ENCODE measurements at regions of chr19 and their contacts with region 1.

Region 1: DNA sequence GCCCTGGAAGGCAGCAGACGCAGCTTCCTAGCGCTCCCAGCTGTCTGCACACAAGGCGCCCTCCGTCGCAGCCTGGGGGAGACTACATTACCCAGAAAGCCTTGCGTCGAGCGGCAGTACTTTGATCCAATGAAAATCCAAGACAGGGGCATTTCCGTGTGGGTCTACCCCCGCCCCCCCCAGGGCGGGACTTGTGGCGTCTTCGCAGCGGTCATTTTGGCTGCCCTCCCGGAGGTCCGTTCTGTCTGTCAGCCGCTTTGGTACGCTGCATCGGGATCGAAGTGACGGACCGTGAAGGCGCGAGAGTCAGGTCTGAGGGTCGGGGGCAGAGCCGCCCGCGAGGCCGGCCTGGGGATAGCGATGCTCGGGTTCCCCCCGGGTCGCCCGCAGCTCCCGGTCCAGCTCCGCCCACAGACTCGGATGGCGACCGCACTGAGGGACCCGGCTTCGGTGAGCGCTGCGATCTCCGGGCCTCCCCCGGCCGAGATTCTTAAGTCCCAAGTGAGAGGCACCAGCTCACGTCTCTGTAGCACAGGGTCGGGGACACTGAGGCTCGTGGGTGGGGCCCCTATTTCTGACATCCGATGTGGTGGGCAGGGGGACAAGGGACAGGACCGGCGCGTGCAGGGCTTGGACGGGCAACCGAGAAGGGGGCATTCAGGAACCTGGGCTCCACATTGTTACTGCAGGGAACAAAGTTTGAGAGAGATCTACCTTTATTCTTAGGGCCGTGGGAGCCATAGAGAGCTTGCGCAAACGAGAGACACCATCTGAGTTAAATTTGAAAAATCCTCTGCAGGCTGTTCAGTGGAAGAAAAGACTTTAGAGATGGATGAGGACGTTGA is at the start of gene ZNF211:
- DNase-seq: peak; percentile 94
- H3K4me3 ChIP-seq: peak within 1 kb of the TSS; percentile 51 to 75 (median 71)
- H3K27ac ChIP-seq: peak within 1 kb of the TSS; percentile 26
- H3K4me1 ChIP-seq: peaks cover 5% of the 10 kb centered on the region
- H3K27me3 ChIP-seq: no peaks in the 10 kb centered on the region
- CTCF ChIP-seq: no peak
- POLR2A ChIP-seq: peak; percentile 46
- total RNA-seq, gene ZNF211: 8.6 and 9.4 TPM in 2 replicates

Region 2: DNA sequence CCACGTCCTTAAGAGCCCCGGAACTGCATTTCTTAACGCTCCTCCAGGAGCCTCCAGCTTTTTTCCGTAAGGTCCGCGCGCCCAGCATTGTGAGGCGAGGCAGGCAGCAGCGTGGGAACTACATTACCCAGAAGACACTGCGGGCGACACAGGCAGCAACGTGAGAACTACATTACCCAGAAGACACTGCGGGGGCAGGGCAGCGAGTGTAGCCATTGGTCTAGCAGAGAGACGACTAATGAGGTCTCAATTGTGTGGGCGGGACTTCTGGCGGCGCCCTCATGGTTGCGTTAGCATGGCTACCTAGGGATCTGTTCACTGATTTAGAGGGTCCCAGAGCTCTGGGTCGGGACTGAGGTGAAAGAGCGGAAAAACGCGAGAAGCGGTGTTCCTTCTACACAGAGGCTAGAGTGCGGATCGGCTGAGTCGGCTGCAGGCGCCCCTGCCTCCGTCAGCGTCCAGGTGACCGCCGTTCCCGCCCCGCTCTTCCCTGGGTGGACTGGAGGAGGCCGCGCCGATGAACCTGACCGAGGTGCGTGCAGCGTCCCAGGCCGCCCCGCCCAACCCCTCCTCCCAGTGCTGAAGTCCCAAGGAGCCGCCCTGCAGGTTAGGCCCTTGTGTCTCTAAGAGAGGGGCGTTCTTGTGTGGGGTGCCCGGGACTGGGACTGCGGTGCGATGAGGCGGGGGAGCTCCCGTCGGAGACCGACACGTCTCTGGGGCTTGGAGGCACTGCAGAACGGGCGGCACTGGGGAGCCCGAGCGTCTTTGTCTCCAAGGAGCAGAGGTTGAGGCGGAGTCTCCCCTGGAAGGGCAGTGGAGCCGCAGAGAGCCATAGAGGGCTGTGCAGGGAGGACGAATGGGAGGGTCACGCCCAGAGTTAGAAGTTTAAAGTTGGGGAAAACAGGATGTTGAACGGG is 197.9 kb before region 1 on chr19 and contains the start of gene ZNF749:
- CTCF ChIA-PET with region 1: no interaction called
- POLR2A ChIA-PET with region 1: no interaction called
- dilution Hi-C with region 1: no loop called
- intact Hi-C with region 1: loop called (anchors 2 kb)
- DNase-seq: peak; percentile 98
- H3K4me3 ChIP-seq: peak within 1 kb of the TSS; percentile 58 to 81 (median 68)
- H3K27ac ChIP-seq: no peak within 1 kb of the TSS
- H3K4me1 ChIP-seq: peaks cover 10% of the 10 kb centered on the region
- H3K27me3 ChIP-seq: no peaks in the 10 kb centered on the region
- CTCF ChIP-seq: no peak
- POLR2A ChIP-seq: peak; percentile 14
- total RNA-seq, gene ZNF749: 8.9 and 11.5 TPM in 2 replicates

Region 3: DNA sequence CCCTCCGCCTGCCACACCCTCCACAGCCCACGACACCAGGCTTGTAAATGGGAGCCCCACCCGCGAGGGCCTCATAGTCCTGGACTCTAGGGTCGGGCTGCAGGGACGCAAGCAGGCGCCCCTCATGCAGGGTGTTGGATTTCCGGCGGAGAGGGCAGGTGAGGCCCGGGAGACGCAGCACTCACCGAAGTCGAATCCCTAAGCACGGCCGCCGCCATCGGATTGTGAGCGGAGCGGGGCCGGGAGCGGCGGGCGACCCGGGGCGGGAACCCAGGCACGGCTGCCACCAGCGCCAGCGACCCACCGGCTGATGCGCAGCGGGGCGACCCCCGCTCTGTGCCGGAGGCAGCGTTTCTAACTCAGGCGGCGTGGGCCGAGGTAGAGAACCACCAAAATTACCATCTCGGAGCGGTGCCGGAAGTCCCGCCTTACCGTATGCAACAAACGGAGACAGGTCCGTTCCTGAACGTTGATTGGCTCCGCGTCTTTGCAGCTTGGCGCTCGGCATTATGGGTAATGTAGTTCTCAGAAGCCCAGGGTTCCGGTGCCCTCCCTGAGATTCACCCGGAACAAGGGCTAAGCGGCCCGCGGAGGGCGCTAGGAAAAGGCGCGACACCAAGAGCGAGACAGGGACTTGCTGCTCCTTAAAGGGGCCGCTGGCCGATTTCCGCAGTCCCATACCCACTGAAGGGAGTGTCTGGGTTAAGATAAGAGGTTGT is 54.6 kb before region 1 on chr19 and contains the start of gene ZNF416:
- CTCF ChIA-PET with region 1: no interaction called
- POLR2A ChIA-PET with region 1: no interaction called
- dilution Hi-C with region 1: no loop called
- intact Hi-C with region 1: loop called (anchors 1 kb)
- DNase-seq: peak; percentile 96
- H3K4me3 ChIP-seq: peak within 1 kb of the TSS; percentile 79 to 93 (median 85)
- H3K27ac ChIP-seq: no peak within 1 kb of the TSS
- H3K4me1 ChIP-seq: peaks cover 10% of the 10 kb centered on the region
- H3K27me3 ChIP-seq: no peaks in the 10 kb centered on the region
- CTCF ChIP-seq: no peak
- POLR2A ChIP-seq: no peak
- total RNA-seq, gene ZNF416: 3.8 and 4.2 TPM in 2 replicates

Region 4: GRCh38 chr19:57599761-57600383 is 33.3 kb before region 1 on chr19 and contains the start of gene ZNF530:
- CTCF ChIA-PET with region 1: no interaction called
- POLR2A ChIA-PET with region 1: no interaction called
- dilution Hi-C with region 1: no loop called
- intact Hi-C with region 1: loop called (anchors 1 kb)
- DNase-seq: peak; percentile 81
- H3K4me3 ChIP-seq: peak within 1 kb of the TSS; percentile 38 to 76 (median 61)
- H3K27ac ChIP-seq: no peak within 1 kb of the TSS
- H3K4me1 ChIP-seq: peaks cover 2% of the 10 kb centered on the region
- H3K27me3 ChIP-seq: no peaks in the 10 kb centered on the region
- CTCF ChIP-seq: no peak
- POLR2A ChIP-seq: no peak
- total RNA-seq, gene ZNF530: 4.0 TPM in 2 replicates

Region 5: DNA sequence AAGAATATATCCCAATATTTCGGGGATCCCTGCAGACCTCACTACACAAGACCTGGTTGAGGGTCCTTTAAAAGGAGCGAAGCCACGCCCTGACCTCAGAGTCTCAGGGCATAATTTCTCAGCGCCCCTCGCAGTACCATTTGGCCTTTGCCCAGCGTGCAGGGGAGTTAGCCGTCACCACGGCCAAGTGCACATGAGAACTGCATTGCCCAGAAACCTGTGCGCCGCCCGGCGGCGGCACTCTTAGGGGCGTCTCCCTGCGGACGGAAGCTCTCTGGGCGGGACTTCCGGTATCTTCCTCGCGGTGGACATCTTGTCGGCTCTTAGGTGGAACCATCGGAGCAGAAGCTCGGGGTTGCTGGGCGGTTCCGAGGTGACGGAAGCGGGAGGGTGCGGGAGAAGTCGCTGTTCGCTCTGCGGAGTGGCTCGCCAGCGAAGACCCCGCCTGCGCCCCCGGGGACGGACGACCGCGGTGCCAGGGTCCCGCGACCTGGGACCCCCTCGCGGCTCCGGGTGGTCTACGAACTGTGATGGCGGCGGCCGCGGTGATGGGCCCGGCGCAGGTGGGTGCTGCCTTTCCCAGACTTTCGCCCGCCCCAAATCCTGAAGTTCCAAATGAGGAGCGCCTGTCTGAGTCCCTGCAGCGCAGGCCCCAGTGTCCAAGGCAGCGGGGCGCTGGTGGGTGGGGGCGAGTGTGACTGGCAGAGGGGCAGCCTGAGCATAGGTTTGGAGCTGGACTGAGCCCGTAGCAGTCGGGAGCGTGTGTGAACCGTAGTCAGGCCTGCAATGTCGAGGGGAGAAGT is 19.1 kb before region 1 on chr19 and contains the start of gene ZNF134:
- CTCF ChIA-PET with region 1: interaction called, 3 read pairs
- POLR2A ChIA-PET with region 1: interaction called, 3 read pairs
- dilution Hi-C with region 1: no loop called
- intact Hi-C with region 1: loop called (anchors 1 kb)
- DNase-seq: peak; percentile 84
- H3K4me3 ChIP-seq: peak within 1 kb of the TSS; percentile 53 to 77 (median 65)
- H3K27ac ChIP-seq: no peak within 1 kb of the TSS
- H3K4me1 ChIP-seq: no peaks in the 10 kb centered on the region
- H3K27me3 ChIP-seq: no peaks in the 10 kb centered on the region
- CTCF ChIP-seq: peak in 1 of 2 donors; percentile 62
- POLR2A ChIP-seq: peak; percentile 49
- total RNA-seq, gene ZNF134: 11.1 and 12.3 TPM in 2 replicates

Region 6: DNA sequence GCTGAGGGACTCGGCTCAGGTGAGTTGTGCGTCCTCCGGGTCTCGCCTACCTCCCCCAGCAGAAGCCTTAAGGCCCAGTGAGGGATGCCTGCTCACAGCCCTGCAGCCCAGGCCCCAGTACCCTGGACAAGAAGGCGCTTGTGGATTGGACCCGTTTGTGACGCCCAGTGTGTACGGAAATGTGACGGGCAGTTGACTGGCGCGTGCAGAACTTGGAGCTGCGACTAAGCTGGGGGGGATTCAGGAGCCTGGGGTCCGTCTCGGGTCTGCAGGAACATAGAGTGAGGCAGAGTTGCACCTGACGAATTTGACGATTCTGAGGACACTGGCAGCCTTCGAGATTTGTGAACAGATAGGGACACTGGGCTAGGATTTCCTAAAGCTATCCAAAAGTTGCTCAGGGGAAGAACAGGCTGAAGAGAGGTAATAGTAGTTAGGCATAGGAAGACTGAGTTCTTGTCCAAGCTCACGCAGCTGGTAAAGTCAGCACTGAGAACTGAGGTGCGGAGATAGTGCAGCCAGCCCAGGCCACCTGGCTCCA is 49.1 kb after region 1 on chr19:
- CTCF ChIA-PET with region 1: interaction called, 4 read pairs
- POLR2A ChIA-PET with region 1: no interaction called
- dilution Hi-C with region 1: no loop called
- intact Hi-C with region 1: loop called (anchors 2 kb)
- DNase-seq: no peak
- H3K4me3 ChIP-seq: peak overlapping the region; percentile 57 to 87 (median 77)
- H3K27ac ChIP-seq: peak overlapping the region; percentile 7
- H3K4me1 ChIP-seq: peaks cover 8% of the 10 kb centered on the region
- H3K27me3 ChIP-seq: no peaks in the 10 kb centered on the region
- CTCF ChIP-seq: no peak
- POLR2A ChIP-seq: no peak

Region 7: GRCh38 chr19:58002384-58003173 is 369.4 kb after region 1 on chr19 and contains the start of gene ZNF606:
- CTCF ChIA-PET with region 1: interaction called, 7 read pairs
- POLR2A ChIA-PET with region 1: no interaction called
- dilution Hi-C with region 1: no loop called
- intact Hi-C with region 1: loop called (anchors 10 kb)
- DNase-seq: peak; percentile 89
- H3K4me3 ChIP-seq: peak within 1 kb of the TSS; percentile 39 to 90 (median 75)
- H3K27ac ChIP-seq: peak within 1 kb of the TSS; percentile 24
- H3K4me1 ChIP-seq: peaks cover 5% of the 10 kb centered on the region
- H3K27me3 ChIP-seq: no peaks in the 10 kb centered on the region
- CTCF ChIP-seq: no peak
- POLR2A ChIP-seq: peak; percentile 67
- total RNA-seq, gene ZNF606: 7.8 and 10.8 TPM in 2 replicates